CD4-positive, alpha-beta T cell (primary cell): ENCODE measurements at regions of chr5 and their contacts with region 1.

Region 1: DNA sequence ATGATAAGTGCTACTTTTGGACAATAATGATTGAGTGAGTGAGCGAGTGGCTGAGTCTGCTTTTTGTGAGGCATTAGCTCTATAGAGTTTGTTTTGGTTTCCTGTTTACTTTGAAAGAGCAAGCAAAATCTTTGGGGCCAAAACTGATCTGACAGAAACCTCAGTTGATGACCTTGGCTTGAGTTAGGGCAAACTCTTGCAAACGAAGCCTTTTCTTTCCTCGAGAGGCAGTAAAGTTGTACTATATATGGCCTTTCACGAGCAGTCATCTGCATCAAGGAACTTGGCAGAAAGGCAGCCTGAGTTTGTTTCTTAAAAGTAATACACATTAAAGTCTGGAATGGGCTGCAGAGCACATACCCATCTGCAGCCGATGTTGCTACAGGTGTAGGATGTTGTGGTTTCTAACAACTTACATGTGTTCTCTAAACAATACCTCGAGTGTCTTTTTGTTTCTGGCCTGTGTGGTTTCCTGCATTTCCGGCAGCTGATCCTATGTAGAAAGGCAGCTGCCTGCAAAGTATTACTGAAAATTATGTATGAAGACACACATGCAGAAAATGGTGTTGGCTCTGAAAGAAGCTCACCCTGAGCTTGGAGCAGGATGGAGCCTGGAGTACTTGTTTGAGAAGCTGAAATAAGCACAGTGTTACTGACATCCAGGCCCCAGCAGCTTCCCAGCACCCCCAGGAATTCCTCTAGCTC is 60.8 kb downstream of the FOXD1 start:
- DNase-seq: peak in 13 of 14 experiments; percentile 25 to 88 (median 44)
- ATAC-seq: peak; percentile 95
- H3K4me3 ChIP-seq: no peak overlapping the region
- H3K4me3 Mint-ChIP-seq: peak overlapping the region; percentile 62
- H3K27ac ChIP-seq: peak overlapping the region in 1 of 2 donors; percentile 4
- H3K27ac Mint-ChIP-seq: peak overlapping the region; percentile 34
- H3K4me1 ChIP-seq: peaks cover 29% of the 10 kb centered on the region
- H3K4me1 Mint-ChIP-seq: peaks cover 38% of the 10 kb centered on the region
- H3K27me3 ChIP-seq: peaks cover 12 to 14% of the 10 kb centered on the region in 2 experiments
- H3K27me3 Mint-ChIP-seq: peaks cover 19% of the 10 kb centered on the region
- CTCF ChIP-seq: no peak

Region 2: DNA sequence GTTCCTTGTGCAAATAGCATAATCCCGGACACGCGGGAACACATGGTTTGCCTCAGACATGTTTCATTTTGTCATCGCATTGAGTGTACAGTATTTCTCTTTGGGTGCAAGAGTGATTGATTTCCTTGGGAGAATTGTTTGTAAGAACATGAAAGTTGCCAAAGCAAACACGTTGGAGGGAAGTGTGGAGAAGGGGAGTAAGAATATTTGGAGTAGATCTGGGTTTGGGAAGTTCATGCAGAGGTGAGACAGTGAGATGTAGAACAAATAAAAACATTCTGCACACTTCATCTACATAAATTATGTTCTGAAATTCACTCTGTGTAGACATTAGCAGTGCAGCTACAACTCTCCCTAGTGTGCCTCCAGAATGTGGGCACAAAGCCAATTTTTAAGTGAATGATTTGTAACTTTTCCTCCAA is 36.8 kb after region 1 on chr5:
- CTCF ChIA-PET with region 1: interaction called, 4 read pairs
- POLR2A ChIA-PET with region 1: no interaction called
- intact Hi-C with region 1: loop called in 1 of 2 experiments (anchors 2 kb)
- DNase-seq: no peak
- ATAC-seq: no peak
- H3K4me3 ChIP-seq: no peak overlapping the region
- H3K4me3 Mint-ChIP-seq: no peak overlapping the region
- H3K27ac ChIP-seq: no peak overlapping the region
- H3K27ac Mint-ChIP-seq: no peak overlapping the region
- H3K4me1 ChIP-seq: peaks cover 6% of the 10 kb centered on the region
- H3K4me1 Mint-ChIP-seq: peaks cover 9% of the 10 kb centered on the region
- H3K27me3 ChIP-seq: peaks cover 19 to 38% of the 10 kb centered on the region in 2 experiments
- H3K27me3 Mint-ChIP-seq: peaks cover 86% of the 10 kb centered on the region
- CTCF ChIP-seq: no peak

Region 3: DNA sequence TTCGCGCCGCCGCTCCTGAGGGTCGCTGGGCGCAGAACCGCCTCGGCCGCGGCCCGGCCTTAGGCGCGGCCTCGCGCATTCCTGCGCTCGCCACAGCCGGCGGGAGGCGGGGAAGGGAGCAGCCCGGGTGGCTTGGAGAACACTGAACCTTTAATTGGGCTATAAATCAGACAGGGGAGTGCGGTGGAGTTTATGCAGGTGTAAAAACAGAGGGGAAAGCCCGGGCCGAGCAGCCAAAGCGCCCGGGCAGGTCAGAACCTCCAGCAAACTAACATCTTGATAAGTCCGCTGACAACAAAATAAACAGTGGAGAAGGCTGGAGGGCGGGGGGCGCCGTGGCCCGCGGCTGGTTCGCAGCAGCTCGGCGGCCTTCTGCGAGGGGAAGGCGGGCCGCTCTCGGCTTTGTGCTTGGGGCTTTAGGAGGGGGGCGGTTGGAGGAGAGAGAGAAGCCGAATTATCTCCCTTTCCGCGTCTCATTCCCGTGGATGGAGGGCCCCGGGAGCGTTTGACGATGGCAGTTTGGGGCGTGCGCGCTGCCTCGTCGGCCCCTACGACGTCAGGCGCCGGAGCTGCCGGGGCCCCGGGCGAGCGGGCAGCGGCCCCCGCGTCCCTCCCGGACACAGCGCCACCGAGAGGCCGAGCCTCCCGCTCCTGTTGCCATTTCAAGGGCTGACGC is 49.5 kb after region 1 on chr5:
- CTCF ChIA-PET with region 1: no interaction called
- POLR2A ChIA-PET with region 1: no interaction called
- intact Hi-C with region 1: loop called (anchors 5 kb)
- DNase-seq: peak in 1 of 14 experiments; percentile 8
- ATAC-seq: no peak
- H3K4me3 ChIP-seq: no peak overlapping the region
- H3K4me3 Mint-ChIP-seq: peak overlapping the region; percentile 9
- H3K27ac ChIP-seq: no peak overlapping the region
- H3K27ac Mint-ChIP-seq: no peak overlapping the region
- H3K4me1 ChIP-seq: peaks cover 18% of the 10 kb centered on the region
- H3K4me1 Mint-ChIP-seq: peaks cover 19% of the 10 kb centered on the region
- H3K27me3 ChIP-seq: peaks cover 67 to 96% of the 10 kb centered on the region in 2 experiments
- H3K27me3 Mint-ChIP-seq: peaks cover 93% of the 10 kb centered on the region
- CTCF ChIP-seq: no peak

Region 4: GRCh38 chr5:73783828-73784227 is 396.1 kb after region 1 on chr5:
- CTCF ChIA-PET with region 1: no interaction called
- POLR2A ChIA-PET with region 1: no interaction called
- intact Hi-C with region 1: no loop called
- DNase-seq: no peak
- ATAC-seq: no peak
- H3K4me3 ChIP-seq: no peak overlapping the region
- H3K4me3 Mint-ChIP-seq: no peak overlapping the region
- H3K27ac ChIP-seq: no peak overlapping the region
- H3K27ac Mint-ChIP-seq: no peak overlapping the region
- H3K4me1 ChIP-seq: no peaks in the 10 kb centered on the region
- H3K4me1 Mint-ChIP-seq: no peaks in the 10 kb centered on the region
- H3K27me3 ChIP-seq: no peaks in the 10 kb centered on the region
- H3K27me3 Mint-ChIP-seq: peaks cover 16% of the 10 kb centered on the region
- CTCF ChIP-seq: no peak